Transverse colon (tissue), 4 donors: ENCODE measurements at regions of chr11 and their contacts with region 1.

Region 1: DNA sequence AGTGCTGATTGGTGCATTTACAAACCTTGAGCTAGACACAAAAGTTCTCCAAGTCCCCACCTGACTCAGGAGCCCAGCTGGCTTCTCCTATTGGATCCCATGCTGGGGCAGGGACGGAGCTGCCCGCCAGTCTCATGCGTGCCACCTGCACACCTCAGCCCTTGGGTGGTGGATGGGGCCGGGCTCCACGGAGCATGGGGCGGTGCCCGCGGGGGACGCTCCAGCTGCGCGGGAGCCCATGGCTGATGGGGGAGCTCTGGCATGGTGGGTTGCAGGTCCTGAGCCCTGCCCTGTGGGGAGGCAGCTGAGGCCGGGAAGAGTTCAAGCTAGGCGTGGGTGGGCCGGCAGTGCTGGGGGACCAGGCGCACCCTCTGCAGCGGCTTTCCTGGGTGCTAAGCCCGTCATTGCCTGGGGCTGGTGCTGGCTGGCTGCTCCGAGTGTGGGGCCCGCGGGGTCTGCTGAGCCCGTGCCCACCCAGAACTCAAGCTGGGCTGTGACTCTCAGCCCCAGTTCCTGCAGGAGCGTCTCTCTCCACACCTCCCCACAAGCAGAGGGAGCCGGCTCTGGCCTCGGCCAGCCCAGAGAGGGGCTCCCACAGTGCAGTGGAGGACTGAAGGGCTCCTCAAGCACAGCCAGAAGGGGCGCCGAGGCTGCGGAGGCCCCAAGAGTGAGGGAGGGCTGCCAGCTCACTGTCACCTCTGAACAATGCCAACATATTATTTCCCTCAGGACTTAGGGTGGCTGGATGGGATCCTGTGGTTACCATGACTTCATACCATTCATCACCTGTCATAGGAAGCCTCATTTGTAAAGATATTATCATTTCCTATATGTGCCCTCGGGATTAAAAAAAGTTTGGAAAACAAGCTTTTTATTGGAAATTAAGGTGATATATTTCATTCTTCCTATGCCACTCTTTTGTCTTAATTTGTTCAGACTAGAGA is 688.7 kb downstream of the ETS1 start:
- DNase-seq: no peak
- H3K4me3 ChIP-seq: no peak overlapping the region
- H3K27ac ChIP-seq: no peak overlapping the region
- H3K4me1 ChIP-seq: no peaks in the 10 kb centered on the region
- H3K27me3 ChIP-seq: no peaks in the 10 kb centered on the region
- CTCF ChIP-seq: no peak
- EP300 ChIP-seq: no peak
- POLR2A ChIP-seq: no peak

Region 2: DNA sequence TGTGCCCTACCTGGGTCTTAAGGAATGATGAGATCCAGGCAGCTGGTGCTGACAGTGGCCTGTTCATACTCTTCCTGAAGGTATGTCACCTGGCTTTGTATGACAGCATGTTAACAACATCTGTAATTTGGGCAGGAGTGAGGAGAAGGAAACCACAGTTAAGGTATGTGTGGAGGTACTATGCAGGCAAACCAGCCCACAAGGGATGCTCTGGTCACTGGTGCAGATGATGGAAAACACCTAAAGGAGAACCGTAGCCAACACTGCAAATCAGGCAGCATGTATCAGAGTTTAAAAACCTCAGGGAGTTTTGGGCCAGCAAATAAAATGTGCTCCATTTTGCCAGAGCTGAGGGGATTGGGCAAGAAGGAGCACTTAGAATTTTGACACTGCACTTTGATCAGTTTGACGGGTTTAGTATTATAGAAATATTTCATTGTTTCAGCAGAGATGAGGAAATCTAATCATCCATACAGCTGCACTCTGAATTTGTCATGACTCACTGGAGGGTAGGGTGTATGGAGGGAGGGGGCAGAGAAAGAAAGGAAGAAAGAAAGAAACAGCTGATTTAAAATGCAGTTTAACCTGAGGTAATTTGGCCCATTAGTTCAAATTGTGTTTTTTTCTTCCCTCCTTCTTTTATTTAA is 1159.1 kb before region 1 on chr11:
- in situ Hi-C with region 1: no loop called
- intact Hi-C with region 1: loop called (anchors 5 kb)
- DNase-seq: no peak
- H3K4me3 ChIP-seq: no peak overlapping the region
- H3K27ac ChIP-seq: no peak overlapping the region
- H3K4me1 ChIP-seq: no peaks in the 10 kb centered on the region
- H3K27me3 ChIP-seq: no peaks in the 10 kb centered on the region
- CTCF ChIP-seq: no peak
- EP300 ChIP-seq: no peak
- POLR2A ChIP-seq: no peak

Region 3: GRCh38 chr11:127873478-127873877 is 25.2 kb before region 1 on chr11:
- in situ Hi-C with region 1: no loop called
- intact Hi-C with region 1: no loop called
- DNase-seq: no peak
- H3K4me3 ChIP-seq: no peak overlapping the region
- H3K27ac ChIP-seq: no peak overlapping the region
- H3K4me1 ChIP-seq: no peaks in the 10 kb centered on the region
- H3K27me3 ChIP-seq: no peaks in the 10 kb centered on the region
- CTCF ChIP-seq: no peak
- EP300 ChIP-seq: no peak
- POLR2A ChIP-seq: no peak

Region 4: GRCh38 chr11:128451651-128452470 is 553.2 kb after region 1 on chr11:
- in situ Hi-C with region 1: no loop called
- intact Hi-C with region 1: no loop called
- DNase-seq: peak; percentile 38
- H3K4me3 ChIP-seq: no peak overlapping the region
- H3K27ac ChIP-seq: peak overlapping the region; percentile 37 to 67 (median 63)
- H3K4me1 ChIP-seq: peaks cover 12 to 51% (median 32%) of the 10 kb centered on the region in 4 donors
- H3K27me3 ChIP-seq: no peaks in the 10 kb centered on the region
- CTCF ChIP-seq: peak in 1 of 5 experiments; percentile 15
- EP300 ChIP-seq: no peak
- POLR2A ChIP-seq: no peak